GM12878 (cell line): ENCODE measurements at regions of chr5 and their contacts with region 1.

Region 1: DNA sequence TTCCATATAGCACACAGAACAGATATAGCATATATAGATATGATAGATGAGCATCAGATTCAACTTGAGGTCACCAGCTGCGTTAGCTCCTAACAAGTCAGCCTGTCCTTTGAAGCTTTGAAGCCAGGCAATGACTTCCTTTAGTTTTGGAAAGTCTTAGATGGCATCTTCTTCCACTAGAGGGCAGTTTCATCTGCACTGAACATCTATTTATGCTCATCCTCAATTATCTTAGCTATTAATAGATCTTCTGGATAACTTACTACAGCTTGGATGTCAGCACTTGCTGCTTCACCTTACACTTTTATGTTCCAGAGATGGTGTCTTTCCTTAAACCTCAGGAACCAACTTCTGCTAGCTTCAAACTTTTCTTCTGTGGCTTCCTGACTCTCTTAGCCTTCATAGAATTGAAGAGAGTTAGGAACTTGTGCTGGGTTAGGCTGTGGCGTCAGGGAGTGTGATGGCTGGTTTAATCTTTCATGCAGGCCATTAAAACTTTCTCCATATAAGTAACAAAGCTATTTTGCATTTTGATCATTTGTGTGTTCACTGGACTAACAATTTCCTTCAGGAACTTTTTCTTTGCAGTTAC is 1401.4 kb downstream of the EFNA5 start:
- DNase-seq: no peak
- ATAC-seq: peak; percentile 72
- H3K4me3 ChIP-seq: no peak overlapping the region
- H3K27ac ChIP-seq: no peak overlapping the region
- H3K4me1 ChIP-seq: no peaks in the 10 kb centered on the region
- H3K27me3 ChIP-seq: no peaks in the 10 kb centered on the region
- CTCF ChIP-seq: peak; percentile 21 to 52 (median 42); a peak in 4 of 6 replicates
- EP300 ChIP-seq: no peak
- POLR2A ChIP-seq: no peak
- RAD21 ChIP-seq: no peak; the same call in 1 of the 2 replicates

Region 2: DNA sequence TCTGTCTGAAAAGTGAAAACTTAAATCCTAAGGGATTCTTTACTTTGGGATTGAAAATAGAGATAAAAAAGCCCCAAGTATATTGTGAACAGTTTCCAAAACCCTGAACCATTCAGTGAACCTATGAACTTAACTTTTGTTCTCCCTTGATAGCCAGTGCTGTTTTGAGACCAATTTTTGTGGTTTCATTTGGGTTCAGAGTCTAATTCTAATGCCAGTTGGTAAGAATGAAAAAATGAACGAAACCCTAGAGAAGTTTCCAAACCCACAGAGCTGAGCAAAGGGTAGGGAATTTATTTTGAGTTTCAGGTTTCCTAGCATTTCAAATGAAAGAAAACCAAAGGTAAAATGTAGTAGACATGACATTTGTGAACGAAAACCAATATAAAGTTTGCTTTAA is 34.6 kb after region 1 on chr5:
- CTCF ChIA-PET with region 1: no interaction called
- POLR2A ChIA-PET with region 1: no interaction called
- RAD21 ChIA-PET with region 1: no interaction called
- SMC1A ChIA-PET with region 1: no interaction called
- in situ Hi-C with region 1: no loop called
- intact Hi-C with region 1: no loop called
- DNase-seq: no peak
- ATAC-seq: no peak
- H3K4me3 ChIP-seq: no peak overlapping the region
- H3K27ac ChIP-seq: no peak overlapping the region
- H3K4me1 ChIP-seq: no peaks in the 10 kb centered on the region
- H3K27me3 ChIP-seq: no peaks in the 10 kb centered on the region
- CTCF ChIP-seq: no peak
- EP300 ChIP-seq: no peak
- POLR2A ChIP-seq: no peak
- RAD21 ChIP-seq: no peak

Region 3: GRCh38 chr5:106699198-106699597 is 429.9 kb after region 1 on chr5:
- CTCF ChIA-PET with region 1: interaction called, 10 read pairs
- POLR2A ChIA-PET with region 1: no interaction called
- RAD21 ChIA-PET with region 1: interaction called, 4 read pairs
- SMC1A ChIA-PET with region 1: interaction called, 7 read pairs
- in situ Hi-C with region 1: no loop called
- intact Hi-C with region 1: no loop called
- DNase-seq: no peak
- ATAC-seq: peak; percentile 78
- H3K4me3 ChIP-seq: no peak overlapping the region
- H3K27ac ChIP-seq: no peak overlapping the region
- H3K4me1 ChIP-seq: no peaks in the 10 kb centered on the region
- H3K27me3 ChIP-seq: no peaks in the 10 kb centered on the region
- CTCF ChIP-seq: peak; percentile 18 to 45 (median 42); a peak in 4 of 6 replicates
- EP300 ChIP-seq: no peak
- POLR2A ChIP-seq: no peak
- RAD21 ChIP-seq: peak; percentile 51

Region 4: DNA sequence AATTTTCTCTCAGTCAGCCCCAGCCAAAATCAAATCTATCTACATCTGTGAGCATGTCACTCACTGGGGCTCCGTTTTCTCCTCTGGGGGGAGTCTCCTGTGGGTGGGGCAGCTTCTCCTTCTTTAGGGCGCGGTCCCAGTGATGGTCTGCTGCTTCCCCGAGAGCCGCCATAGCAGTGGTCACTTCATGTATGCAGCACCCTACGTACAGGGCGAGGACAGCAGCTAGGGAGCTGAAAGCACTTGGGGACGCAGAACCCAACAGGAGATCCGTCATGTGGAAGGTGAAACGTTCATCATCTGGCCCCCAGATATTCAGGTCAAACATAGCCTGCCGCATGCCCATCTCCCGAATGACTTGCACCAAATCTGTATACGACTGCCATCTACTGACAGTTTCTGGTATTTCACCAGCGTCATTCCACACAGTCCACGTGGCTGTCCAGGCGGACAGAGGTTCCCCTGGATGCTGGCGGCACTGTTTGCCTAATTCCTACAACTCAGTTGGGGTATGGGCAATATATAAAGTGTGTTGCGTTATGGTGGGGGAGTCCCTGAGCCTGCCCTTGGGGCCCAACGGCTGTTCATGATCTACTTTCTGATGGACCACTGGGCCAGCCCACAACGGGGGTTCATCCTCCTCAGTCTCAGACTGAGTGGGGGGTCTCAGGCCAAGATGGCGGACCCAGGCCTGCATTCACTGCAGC is 606.4 kb after region 1 on chr5:
- CTCF ChIA-PET with region 1: interaction called, 9 read pairs
- POLR2A ChIA-PET with region 1: no interaction called
- RAD21 ChIA-PET with region 1: interaction called, 6 read pairs
- SMC1A ChIA-PET with region 1: interaction called, 5 read pairs
- in situ Hi-C with region 1: no loop called
- intact Hi-C with region 1: loop called (anchors 2 kb)
- DNase-seq: no peak
- ATAC-seq: peak; percentile 94
- H3K4me3 ChIP-seq: no peak overlapping the region
- H3K27ac ChIP-seq: no peak overlapping the region
- H3K4me1 ChIP-seq: no peaks in the 10 kb centered on the region
- H3K27me3 ChIP-seq: no peaks in the 10 kb centered on the region
- CTCF ChIP-seq: peak; percentile 59 to 69 (median 61)
- EP300 ChIP-seq: no peak
- POLR2A ChIP-seq: no peak
- RAD21 ChIP-seq: peak; percentile 77